Natural killer cell (primary cell): ENCODE measurements at regions of chr6 and their contacts with region 1.

Region 1: GRCh38 chr6:163413345-163414116 is 987 bp upstream of the QKI start:
- DNase-seq: peak; percentile 94 to 97
- ATAC-seq: peak; percentile 70 to 91 (median 76)
- H3K4me3 ChIP-seq: peak overlapping the region; percentile 74
- H3K4me3 Mint-ChIP-seq: peak overlapping the region; percentile 90
- H3K27ac ChIP-seq: peak overlapping the region; percentile 96
- H3K27ac Mint-ChIP-seq: peak overlapping the region; percentile 86 to 94
- H3K4me1 ChIP-seq: peaks cover 2% of the 10 kb centered on the region
- H3K4me1 Mint-ChIP-seq: peaks cover 34% of the 10 kb centered on the region in 2 donors
- H3K27me3 ChIP-seq: no peaks in the 10 kb centered on the region
- H3K27me3 Mint-ChIP-seq: peaks cover 6 to 8% of the 10 kb centered on the region in 2 donors
- CTCF ChIP-seq: no peak

Region 2: DNA sequence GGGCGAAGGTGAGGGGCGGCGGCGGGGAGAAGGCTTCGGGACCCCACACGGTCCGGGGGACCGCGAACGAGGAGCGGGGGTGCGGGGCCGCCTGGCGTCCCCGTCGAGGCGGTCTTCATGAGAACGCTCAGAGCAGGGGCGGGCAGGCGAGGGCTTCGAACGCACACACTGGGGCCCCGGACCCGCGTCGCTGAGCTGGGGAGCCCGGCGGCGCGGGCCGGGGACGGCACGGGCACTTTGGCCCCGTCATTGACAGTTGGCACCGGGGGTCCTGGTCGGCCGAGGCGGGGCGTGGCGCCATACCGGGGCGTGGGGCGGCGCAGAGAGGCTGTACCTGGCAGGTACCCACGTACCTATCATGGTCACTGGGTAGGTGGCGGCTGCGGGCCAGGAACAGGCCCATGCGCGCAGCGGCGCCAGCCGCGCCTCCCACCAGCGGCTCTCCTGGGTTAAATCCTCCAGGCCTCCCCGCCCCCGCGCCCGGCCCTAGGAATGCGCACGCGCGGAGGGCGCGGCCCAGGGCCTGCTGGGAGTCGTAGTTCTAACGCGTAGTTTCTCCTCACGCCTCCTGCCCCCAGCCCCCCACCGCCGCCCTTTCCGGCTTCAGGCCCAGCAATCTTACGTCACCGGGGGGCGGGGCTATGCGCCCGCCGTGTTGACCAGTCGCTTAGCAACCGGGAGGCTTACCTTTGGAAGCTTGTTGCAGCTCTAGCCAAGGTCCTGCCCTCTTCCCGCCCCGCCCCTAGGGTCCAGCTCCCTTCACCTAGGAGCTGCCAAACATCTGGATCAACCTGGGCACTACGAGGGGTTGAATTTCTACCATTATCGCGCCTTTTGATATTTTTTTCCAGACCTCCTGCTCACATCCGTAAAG is 686.0 kb before region 1 on chr6 and contains the starts of genes PACRG and PRKN:
- intact Hi-C with region 1: loop called (anchors 10 kb)
- DNase-seq: peak; percentile 96 to 97
- ATAC-seq: peak; percentile 91 to 97 (median 93)
- H3K4me3 ChIP-seq: peak within 1 kb of the TSS; percentile 77
- H3K4me3 Mint-ChIP-seq: peak within 1 kb of the TSS; percentile 83
- H3K27ac ChIP-seq: peak within 1 kb of the TSS; percentile 74
- H3K27ac Mint-ChIP-seq: peak within 1 kb of the TSS; percentile 87 to 89
- H3K4me1 ChIP-seq: peaks cover 11% of the 10 kb centered on the region
- H3K4me1 Mint-ChIP-seq: peaks cover 14 to 15% of the 10 kb centered on the region in 2 donors
- H3K27me3 ChIP-seq: no peaks in the 10 kb centered on the region
- H3K27me3 Mint-ChIP-seq: no peaks in the 10 kb centered on the region
- CTCF ChIP-seq: no peak
- total RNA-seq, gene PACRG: 0.52 TPM in 1 of 3 donors, not detected in the others
- total RNA-seq, gene PRKN: 1.4 to 1.9 (median 1.9) TPM

Region 3: GRCh38 chr6:163170294-163170883 is 243.1 kb before region 1 on chr6:
- intact Hi-C with region 1: no loop called
- DNase-seq: peak in 1 of 2 donors; percentile 36
- ATAC-seq: peak in 2 of 3 donors; percentile 67 to 68
- H3K4me3 ChIP-seq: no peak overlapping the region
- H3K4me3 Mint-ChIP-seq: no peak overlapping the region
- H3K27ac ChIP-seq: no peak overlapping the region
- H3K27ac Mint-ChIP-seq: no peak overlapping the region
- H3K4me1 ChIP-seq: no peaks in the 10 kb centered on the region
- H3K4me1 Mint-ChIP-seq: no peaks in the 10 kb centered on the region
- H3K27me3 ChIP-seq: no peaks in the 10 kb centered on the region
- H3K27me3 Mint-ChIP-seq: peaks cover 6 to 7% of the 10 kb centered on the region in 2 donors
- CTCF ChIP-seq: peak; percentile 74

Region 4: DNA sequence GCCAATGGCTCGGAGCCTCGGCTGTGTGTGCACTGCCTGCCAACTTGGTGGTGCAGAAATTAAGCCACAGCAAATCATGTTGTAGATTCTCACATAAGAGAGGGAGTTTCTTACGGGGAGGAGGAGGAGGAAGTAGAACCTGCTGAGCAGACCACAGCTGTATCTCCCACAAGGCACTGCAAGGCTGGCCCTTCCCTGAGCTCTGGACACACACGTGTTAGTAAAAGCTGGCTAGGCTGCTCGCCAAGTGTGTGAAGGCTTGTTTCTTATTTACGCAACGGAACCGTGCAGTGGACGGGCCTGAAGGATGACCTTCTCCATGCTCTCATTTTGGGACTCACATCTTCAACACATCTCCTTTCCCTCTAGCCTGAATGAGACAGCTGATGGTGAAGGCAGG is 14.7 kb before region 1 on chr6:
- intact Hi-C with region 1: no loop called
- DNase-seq: no peak
- ATAC-seq: peak in 2 of 3 donors; percentile 24
- H3K4me3 ChIP-seq: no peak overlapping the region
- H3K4me3 Mint-ChIP-seq: no peak overlapping the region
- H3K27ac ChIP-seq: no peak overlapping the region
- H3K27ac Mint-ChIP-seq: no peak overlapping the region
- H3K4me1 ChIP-seq: no peaks in the 10 kb centered on the region
- H3K4me1 Mint-ChIP-seq: peaks cover 0 to 6% of the 10 kb centered on the region in 2 donors
- H3K27me3 ChIP-seq: no peaks in the 10 kb centered on the region
- H3K27me3 Mint-ChIP-seq: peaks cover 16 to 25% of the 10 kb centered on the region in 2 donors
- CTCF ChIP-seq: no peak

Region 5: DNA sequence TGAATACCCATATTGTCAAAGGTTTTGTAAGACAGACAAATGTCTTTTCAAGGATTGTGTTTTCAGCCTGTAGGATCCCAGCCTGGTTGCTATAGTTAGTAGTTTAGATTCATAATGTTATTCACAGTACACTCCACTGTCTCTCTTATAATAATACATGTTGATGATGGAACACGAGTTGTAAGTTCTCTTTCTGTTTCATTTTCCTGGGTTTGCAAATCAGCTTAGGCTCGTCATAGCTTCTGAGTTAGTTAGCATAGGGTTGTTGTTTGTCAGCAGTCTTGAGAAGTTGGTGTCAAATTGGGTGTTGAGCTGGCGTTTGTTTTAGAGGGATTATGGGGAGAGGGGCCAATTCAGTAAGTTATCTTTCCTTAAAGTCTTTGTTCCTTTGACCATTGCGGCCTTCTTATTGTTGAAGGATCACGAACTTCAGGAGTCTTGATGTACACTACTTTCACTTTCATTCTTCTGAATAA is 46.8 kb after region 1 on chr6:
- intact Hi-C with region 1: loop called (anchors 2 kb)
- DNase-seq: peak; percentile 19 to 70
- ATAC-seq: peak; percentile 87 to 92 (median 88)
- H3K4me3 ChIP-seq: peak overlapping the region; percentile 49
- H3K4me3 Mint-ChIP-seq: peak overlapping the region; percentile 94
- H3K27ac ChIP-seq: peak overlapping the region; percentile 91
- H3K27ac Mint-ChIP-seq: peak overlapping the region; percentile 93 to 96
- H3K4me1 ChIP-seq: peaks cover 9% of the 10 kb centered on the region
- H3K4me1 Mint-ChIP-seq: peaks cover 67 to 70% of the 10 kb centered on the region in 2 donors
- H3K27me3 ChIP-seq: no peaks in the 10 kb centered on the region
- H3K27me3 Mint-ChIP-seq: no peaks in the 10 kb centered on the region
- CTCF ChIP-seq: no peak

Region 6: DNA sequence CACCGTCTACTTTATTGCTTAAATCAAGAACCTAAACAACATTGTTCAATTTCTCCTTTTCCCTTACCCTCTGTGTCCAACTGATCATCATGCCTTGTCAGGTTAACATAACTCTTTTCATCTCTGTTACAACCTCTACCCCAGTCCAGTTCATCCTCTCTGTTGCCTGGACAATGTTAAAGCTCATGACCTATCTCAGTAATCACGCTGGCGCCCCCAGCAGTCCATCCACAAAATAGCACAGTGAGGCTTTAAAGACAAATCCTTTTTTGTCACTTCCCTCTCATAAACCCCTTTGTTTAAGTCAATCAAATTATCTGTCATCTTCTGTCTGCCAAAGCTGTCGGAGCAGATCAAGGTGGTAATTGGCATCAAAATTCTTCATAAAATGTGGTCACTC is 141.1 kb after region 1 on chr6:
- intact Hi-C with region 1: loop called (anchors 5 kb)
- DNase-seq: peak; percentile 48 to 70
- ATAC-seq: peak; percentile 70 to 86 (median 70)
- H3K4me3 ChIP-seq: no peak overlapping the region
- H3K4me3 Mint-ChIP-seq: no peak overlapping the region
- H3K27ac ChIP-seq: no peak overlapping the region
- H3K27ac Mint-ChIP-seq: peak overlapping the region; percentile 12 to 55
- H3K4me1 ChIP-seq: no peaks in the 10 kb centered on the region
- H3K4me1 Mint-ChIP-seq: peaks cover 40 to 52% of the 10 kb centered on the region in 2 donors
- H3K27me3 ChIP-seq: no peaks in the 10 kb centered on the region
- H3K27me3 Mint-ChIP-seq: no peaks in the 10 kb centered on the region
- CTCF ChIP-seq: peak; percentile 72

Region 7: DNA sequence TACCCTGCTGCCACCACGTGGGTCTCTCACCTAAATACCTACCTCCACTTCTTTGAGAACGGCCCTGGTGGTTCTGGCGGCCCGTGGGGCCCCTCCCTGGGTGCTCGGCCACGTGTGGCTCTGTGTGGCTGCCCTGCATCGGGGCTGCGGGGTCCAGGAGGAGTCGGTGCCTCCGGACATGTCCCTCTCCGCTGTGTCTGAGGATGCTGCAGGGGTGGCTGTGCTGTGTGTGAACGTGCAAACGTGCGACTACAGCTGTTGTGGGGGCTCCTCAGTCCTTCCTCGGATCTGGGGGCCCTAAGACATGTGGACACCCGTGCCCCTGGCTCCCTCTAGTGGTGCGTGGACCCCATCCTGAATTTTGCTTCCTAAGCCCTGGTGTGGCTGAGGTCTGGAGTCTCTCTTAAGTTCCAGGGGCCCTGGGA is 692.8 kb after region 1 on chr6:
- intact Hi-C with region 1: loop called (anchors 5 kb)
- DNase-seq: peak in 1 of 2 donors; percentile 25
- ATAC-seq: no peak
- H3K4me3 ChIP-seq: no peak overlapping the region
- H3K4me3 Mint-ChIP-seq: no peak overlapping the region
- H3K27ac ChIP-seq: no peak overlapping the region
- H3K27ac Mint-ChIP-seq: no peak overlapping the region
- H3K4me1 ChIP-seq: peaks cover 16% of the 10 kb centered on the region
- H3K4me1 Mint-ChIP-seq: peaks cover 27% of the 10 kb centered on the region in 2 donors
- H3K27me3 ChIP-seq: no peaks in the 10 kb centered on the region
- H3K27me3 Mint-ChIP-seq: peaks cover 16 to 36% of the 10 kb centered on the region in 2 donors
- CTCF ChIP-seq: peak; percentile 28